Body of pancreas (tissue), 4 donors: ENCODE measurements at regions of chr4 and their contacts with region 1.

Region 1: DNA sequence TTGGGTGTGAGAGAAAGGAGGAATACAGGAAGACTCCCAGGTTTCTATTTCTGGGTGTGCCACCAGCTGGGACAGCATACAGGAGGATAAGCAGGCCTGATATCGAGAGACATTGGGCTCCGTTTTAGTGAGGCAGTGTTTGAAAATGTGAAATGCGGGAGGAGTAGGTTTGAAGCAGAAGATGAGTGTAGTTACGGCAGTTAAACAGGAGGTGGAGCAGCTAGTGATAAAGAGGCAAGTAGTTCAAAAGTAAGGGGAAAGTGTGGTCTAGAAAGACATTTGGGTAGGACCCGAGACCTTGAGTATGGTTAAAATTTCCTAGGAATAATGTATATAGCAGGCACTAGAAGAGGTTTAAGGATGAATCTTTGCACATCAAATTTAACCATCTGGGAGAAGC is 42.4 kb downstream of the DCUN1D4 start:
- DNase-seq: no peak
- ATAC-seq: peak; percentile 33
- H3K4me3 ChIP-seq: no peak overlapping the region
- H3K27ac ChIP-seq: no peak overlapping the region
- H3K4me1 ChIP-seq: no peaks in the 10 kb centered on the region
- H3K27me3 ChIP-seq: no peaks in the 10 kb centered on the region
- CTCF ChIP-seq: peak in 6 of 7 experiments; percentile 9 to 61 (median 42)
- POLR2A ChIP-seq: no peak

Region 2: DNA sequence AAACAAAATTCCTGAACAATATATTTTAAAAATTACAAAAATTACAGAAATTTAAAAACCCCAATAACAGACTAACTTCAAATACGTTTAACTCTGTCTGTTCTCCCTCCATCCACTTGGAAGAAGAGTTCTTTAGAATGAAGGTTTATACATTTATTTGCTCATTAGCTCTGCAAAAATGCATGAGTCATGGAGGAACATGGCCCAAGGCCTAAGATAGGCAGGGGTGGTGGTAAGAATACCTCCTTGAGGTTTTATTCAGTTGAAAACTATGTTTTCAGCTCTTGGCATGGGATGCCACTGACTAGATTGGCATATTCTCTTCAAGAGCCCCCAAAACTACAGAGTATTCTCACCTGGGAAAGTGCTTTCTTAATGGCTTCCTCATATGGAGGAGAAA is 143.6 kb after region 1 on chr4:
- intact Hi-C with region 1: loop called (anchors 10 kb)
- DNase-seq: no peak
- ATAC-seq: no peak
- H3K4me3 ChIP-seq: no peak overlapping the region
- H3K27ac ChIP-seq: no peak overlapping the region
- H3K4me1 ChIP-seq: no peaks in the 10 kb centered on the region
- H3K27me3 ChIP-seq: no peaks in the 10 kb centered on the region
- CTCF ChIP-seq: no peak
- POLR2A ChIP-seq: no peak